ENCODE measurements at regions of chr7 and their contacts with region 1.

Region 1: DNA sequence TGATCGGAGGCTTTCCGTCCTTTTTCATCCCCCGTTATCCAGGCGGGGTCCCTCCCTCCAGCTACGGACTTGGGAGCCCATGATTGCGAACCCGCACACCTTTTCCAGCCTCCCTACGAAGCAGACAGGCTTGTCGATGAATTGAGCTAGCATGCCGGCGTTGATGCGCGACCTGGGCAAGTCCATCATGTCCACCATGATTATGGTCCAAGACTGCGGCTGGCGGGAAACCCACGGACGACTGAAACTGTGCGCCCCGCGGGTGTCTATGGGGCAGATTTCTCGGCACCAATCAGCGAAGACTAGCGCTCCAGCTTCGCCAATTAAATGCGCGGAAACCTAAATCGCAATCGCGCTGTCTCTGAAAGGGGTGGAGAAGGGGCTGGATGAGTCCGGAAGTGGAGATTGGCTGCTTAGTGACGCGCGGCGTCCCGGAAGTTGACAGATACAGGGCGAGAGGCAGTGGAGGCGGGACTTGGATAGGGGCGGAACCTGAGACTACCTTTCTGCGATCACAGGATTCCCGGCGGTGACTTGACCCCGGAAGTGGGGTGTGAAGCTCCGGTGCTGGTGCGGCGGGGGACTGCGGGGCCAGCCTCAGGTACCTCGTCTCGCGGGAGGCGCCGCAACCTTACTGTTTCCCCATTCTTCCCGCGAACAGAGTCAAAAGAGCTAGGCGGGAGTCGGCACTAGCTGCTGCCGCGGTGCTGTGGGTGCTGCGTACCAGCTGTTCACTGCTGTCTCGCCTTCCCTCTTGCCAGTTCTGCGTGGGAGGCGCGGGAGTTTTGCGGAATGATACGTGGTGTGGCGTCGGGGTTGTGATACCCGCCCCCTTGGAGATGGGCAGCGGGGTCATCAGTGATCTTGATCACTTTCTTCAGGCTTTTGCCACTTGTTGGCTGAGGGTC is at the start of gene UMAD1:
- DNase-seq: peak; percentile 99
- ATAC-seq: peak; percentile 96
- H3K4me3 ChIP-seq: peak within 1 kb of the TSS; percentile 83
- H3K27ac ChIP-seq: peak within 1 kb of the TSS; percentile 50
- H3K4me1 ChIP-seq: peaks cover 20% of the 10 kb centered on the region; the same call in 1 of the 2 replicates
- H3K27me3 ChIP-seq: no peaks in the 10 kb centered on the region
- CTCF ChIP-seq: no peak
- total RNA-seq, gene UMAD1: 6.0 and 8.9 TPM in 2 replicates

Region 2: DNA sequence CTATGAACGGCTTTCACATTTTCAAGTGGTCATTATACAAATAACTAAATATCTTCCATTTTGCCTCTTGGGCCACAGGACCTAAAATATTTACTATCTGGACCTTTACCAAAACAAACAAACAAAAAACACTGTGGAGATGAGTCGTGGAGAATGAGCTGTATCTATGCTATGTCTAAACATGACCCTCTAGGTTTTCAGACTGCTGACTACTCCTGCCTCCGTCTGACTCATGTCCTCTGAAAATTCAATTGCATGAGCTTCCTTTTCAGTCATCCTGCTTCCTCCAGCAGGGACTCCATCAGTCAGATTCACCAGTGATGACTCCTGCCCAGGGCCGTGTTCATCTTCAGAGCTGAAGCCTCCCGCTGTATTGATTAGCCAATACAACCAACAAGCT is 201.6 kb before region 1 on chr7:
- CTCF ChIA-PET with region 1: no interaction called
- POLR2A ChIA-PET with region 1: no interaction called
- intact Hi-C with region 1: loop called (anchors 5 kb)
- DNase-seq: peak; percentile 97
- ATAC-seq: peak; percentile 99
- H3K4me3 ChIP-seq: no peak overlapping the region
- H3K27ac ChIP-seq: peak overlapping the region; percentile 74
- H3K4me1 ChIP-seq: peaks cover 38% of the 10 kb centered on the region
- H3K27me3 ChIP-seq: no peaks in the 10 kb centered on the region
- CTCF ChIP-seq: no peak

Region 3: GRCh38 chr7:7566651-7567611 is 73.5 kb before region 1 on chr7 and contains the start of gene MIOS:
- CTCF ChIA-PET with region 1: no interaction called
- POLR2A ChIA-PET with region 1: no interaction called
- intact Hi-C with region 1: loop called (anchors 2 kb)
- DNase-seq: peak; percentile 81
- ATAC-seq: peak; percentile 74
- H3K4me3 ChIP-seq: peak within 1 kb of the TSS; percentile 86
- H3K27ac ChIP-seq: peak within 1 kb of the TSS; percentile 95
- H3K4me1 ChIP-seq: peaks cover 57% of the 10 kb centered on the region
- H3K27me3 ChIP-seq: no peaks in the 10 kb centered on the region
- CTCF ChIP-seq: no peak
- total RNA-seq, gene MIOS: 18.6 and 26.6 TPM in 2 replicates

Region 4: GRCh38 chr7:7732566-7733290 is 92.3 kb after region 1 on chr7:
- CTCF ChIA-PET with region 1: no interaction called
- POLR2A ChIA-PET with region 1: no interaction called
- intact Hi-C with region 1: loop called (anchors 5 kb)
- DNase-seq: peak; percentile 42
- ATAC-seq: peak; percentile 64
- H3K4me3 ChIP-seq: no peak overlapping the region
- H3K27ac ChIP-seq: no peak overlapping the region
- H3K4me1 ChIP-seq: peaks cover 14% of the 10 kb centered on the region
- H3K27me3 ChIP-seq: no peaks in the 10 kb centered on the region
- CTCF ChIP-seq: no peak

Region 5: GRCh38 chr7:7996576-7996975 is 356.1 kb after region 1 on chr7:
- CTCF ChIA-PET with region 1: no interaction called
- POLR2A ChIA-PET with region 1: no interaction called
- intact Hi-C with region 1: loop called (anchors 5 kb)
- DNase-seq: peak; percentile 95
- ATAC-seq: peak; percentile 99
- H3K4me3 ChIP-seq: peak overlapping the region; percentile 44; the same call in 1 of the 2 replicates
- H3K27ac ChIP-seq: peak overlapping the region; percentile 67
- H3K4me1 ChIP-seq: peaks cover 15% of the 10 kb centered on the region
- H3K27me3 ChIP-seq: no peaks in the 10 kb centered on the region
- CTCF ChIP-seq: no peak